Activated CD4-positive, alpha-beta T cell treated with anti-CD3 and anti-CD28 coated beads for 36 hours (primary cell): ENCODE measurements at regions of chr18 and their contacts with region 1.

Region 1: GRCh38 chr18:9095297-9096006 is 7.0 kb upstream of the NDUFV2 start:
- DNase-seq: peak; percentile 82
- ATAC-seq: peak; percentile 69
- H3K4me3 Mint-ChIP-seq: peak overlapping the region; percentile 68
- H3K27ac Mint-ChIP-seq: peak overlapping the region; percentile 100
- H3K4me1 Mint-ChIP-seq: peaks cover 68% of the 10 kb centered on the region
- H3K27me3 Mint-ChIP-seq: no peaks in the 10 kb centered on the region

Region 2: GRCh38 chr18:9029131-9029530 is 66.3 kb before region 1 on chr18:
- CTCF ChIA-PET with region 1: no interaction called
- POLR2A ChIA-PET with region 1: no interaction called
- intact Hi-C with region 1: no loop called
- DNase-seq: no peak
- ATAC-seq: no peak
- H3K4me3 Mint-ChIP-seq: no peak overlapping the region
- H3K27ac Mint-ChIP-seq: no peak overlapping the region
- H3K4me1 Mint-ChIP-seq: no peaks in the 10 kb centered on the region
- H3K27me3 Mint-ChIP-seq: peaks cover 5% of the 10 kb centered on the region

Region 3: DNA sequence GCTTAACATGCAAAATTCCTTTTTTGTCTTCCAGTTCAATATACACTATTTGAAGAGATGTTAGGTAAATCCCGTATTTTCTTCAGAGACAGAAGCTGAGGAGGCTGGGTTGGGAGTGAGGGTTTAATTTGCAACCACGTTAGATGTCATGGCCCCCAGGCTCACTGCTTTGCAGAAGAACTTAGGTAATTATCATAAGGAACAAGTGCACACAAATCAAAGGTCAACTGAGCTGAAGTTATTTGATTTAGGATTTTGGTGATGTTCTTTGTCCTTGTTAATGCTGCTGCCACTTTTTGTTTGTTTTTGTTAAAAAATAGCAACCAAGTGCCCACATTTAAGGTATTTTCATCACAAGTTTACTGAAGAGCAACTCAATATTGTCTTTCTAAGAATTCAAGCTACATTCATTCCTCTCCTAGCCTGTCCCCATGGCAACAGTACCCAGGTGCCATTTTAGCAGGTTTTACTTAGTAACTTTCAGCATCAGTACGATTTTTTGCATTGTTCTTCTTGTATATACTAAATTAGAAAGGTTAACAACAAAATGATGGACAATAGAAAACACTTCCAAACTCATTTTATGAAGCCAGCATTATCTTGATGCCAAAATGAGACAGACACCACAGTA is 55.9 kb before region 1 on chr18:
- CTCF ChIA-PET with region 1: no interaction called
- POLR2A ChIA-PET with region 1: no interaction called
- intact Hi-C with region 1: no loop called
- DNase-seq: no peak
- ATAC-seq: no peak
- H3K4me3 Mint-ChIP-seq: no peak overlapping the region
- H3K27ac Mint-ChIP-seq: no peak overlapping the region
- H3K4me1 Mint-ChIP-seq: no peaks in the 10 kb centered on the region
- H3K27me3 Mint-ChIP-seq: no peaks in the 10 kb centered on the region

Region 4: DNA sequence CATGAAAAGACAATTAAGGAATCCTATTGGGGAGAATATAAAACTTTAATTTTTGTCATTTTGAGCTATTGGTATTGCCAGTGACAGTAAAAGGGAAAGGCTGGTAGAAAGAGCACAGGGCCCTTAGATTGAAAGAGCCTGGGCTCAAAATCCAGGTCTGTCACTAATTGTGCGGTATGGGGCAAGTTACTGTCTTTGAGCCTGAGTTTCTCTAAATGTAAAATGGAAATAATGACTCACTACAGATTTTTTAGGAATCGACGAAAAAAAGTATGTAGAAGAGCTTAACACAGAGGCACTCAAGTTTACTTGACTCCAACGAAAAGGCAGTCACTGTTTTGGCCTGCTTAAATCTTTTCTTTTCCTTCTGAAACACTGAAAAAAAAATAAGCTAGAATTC is 14.1 kb after region 1 on chr18:
- CTCF ChIA-PET with region 1: interaction called, 4 read pairs
- POLR2A ChIA-PET with region 1: interaction called, 9 read pairs
- intact Hi-C with region 1: loop called in 1 of 2 experiments (anchors 2 kb)
- DNase-seq: no peak
- ATAC-seq: peak; percentile 58
- H3K4me3 Mint-ChIP-seq: peak overlapping the region; percentile 55
- H3K27ac Mint-ChIP-seq: peak overlapping the region; percentile 77
- H3K4me1 Mint-ChIP-seq: peaks cover 87% of the 10 kb centered on the region
- H3K27me3 Mint-ChIP-seq: no peaks in the 10 kb centered on the region